ENCODE measurements at regions of chr21 and their contacts with region 1.

Region 1: GRCh38 chr21:29164325-29164942 is 34.0 kb downstream of the MAP3K7CL start:
- DNase-seq: no peak
- H3K4me3 ChIP-seq: no peak overlapping the region
- H3K27ac ChIP-seq: no peak overlapping the region
- H3K4me1 ChIP-seq: no peaks in the 10 kb centered on the region
- H3K27me3 ChIP-seq: no peaks in the 10 kb centered on the region
- CTCF ChIP-seq: peak; percentile 68

Region 2: DNA sequence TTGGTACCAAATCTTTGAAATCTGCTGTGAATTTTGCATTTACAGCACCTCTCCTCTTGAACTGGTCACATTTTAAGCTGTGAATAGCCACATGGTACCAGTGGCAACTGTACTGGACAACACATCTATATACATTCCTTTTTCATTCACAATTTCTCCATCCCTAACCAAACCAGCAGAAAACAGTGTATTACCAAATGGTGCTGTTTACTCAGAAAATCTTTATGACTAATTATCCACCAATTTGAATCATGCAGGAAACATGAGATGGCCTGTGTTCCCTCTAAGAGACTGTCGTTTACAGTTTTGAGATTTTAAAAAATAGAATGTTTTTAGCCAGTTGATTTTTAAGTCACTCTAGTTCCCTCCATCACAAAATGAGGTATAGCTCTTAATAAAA is 73.4 kb before region 1 on chr21:
- intact Hi-C with region 1: loop called (anchors 5 kb)
- DNase-seq: no peak
- H3K4me3 ChIP-seq: no peak overlapping the region
- H3K27ac ChIP-seq: no peak overlapping the region
- H3K4me1 ChIP-seq: no peaks in the 10 kb centered on the region
- H3K27me3 ChIP-seq: no peaks in the 10 kb centered on the region
- CTCF ChIP-seq: no peak

Region 3: GRCh38 chr21:29104239-29104708 is 60.2 kb before region 1 on chr21:
- intact Hi-C with region 1: no loop called
- DNase-seq: no peak
- H3K4me3 ChIP-seq: no peak overlapping the region
- H3K27ac ChIP-seq: no peak overlapping the region
- H3K4me1 ChIP-seq: no peaks in the 10 kb centered on the region
- H3K27me3 ChIP-seq: no peaks in the 10 kb centered on the region
- CTCF ChIP-seq: no peak

Region 4: DNA sequence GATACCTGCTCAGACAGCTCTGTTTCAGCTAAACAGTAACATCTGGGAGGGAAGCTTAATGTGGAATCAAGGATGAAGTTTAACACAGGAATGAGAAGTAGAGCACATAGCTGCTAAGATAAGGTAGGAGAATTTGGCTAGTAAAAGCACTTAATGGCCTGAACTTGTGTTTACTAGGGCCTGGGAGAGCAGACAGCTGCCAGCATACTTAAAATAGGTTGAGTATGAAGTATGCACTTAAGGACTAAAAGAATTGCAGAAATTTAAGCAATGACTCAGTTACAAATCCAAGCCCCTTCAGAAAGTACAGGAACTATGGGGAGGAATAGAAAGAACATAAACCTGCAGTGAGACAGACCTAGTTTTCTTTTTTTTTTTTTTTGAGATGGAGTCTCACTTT is 187.3 kb after region 1 on chr21:
- intact Hi-C with region 1: loop called (anchors 5 kb)
- DNase-seq: no peak
- H3K4me3 ChIP-seq: no peak overlapping the region
- H3K27ac ChIP-seq: no peak overlapping the region
- H3K4me1 ChIP-seq: no peaks in the 10 kb centered on the region
- H3K27me3 ChIP-seq: no peaks in the 10 kb centered on the region
- CTCF ChIP-seq: no peak

Region 5: GRCh38 chr21:29372063-29372802 is 207.8 kb after region 1 on chr21:
- intact Hi-C with region 1: loop called (anchors 2 kb)
- DNase-seq: peak; percentile 75
- H3K4me3 ChIP-seq: no peak overlapping the region
- H3K27ac ChIP-seq: no peak overlapping the region
- H3K4me1 ChIP-seq: no peaks in the 10 kb centered on the region
- H3K27me3 ChIP-seq: no peaks in the 10 kb centered on the region
- CTCF ChIP-seq: peak; percentile 64

Measured in colonic mucosa (tissue), 4 donors.